Mammary epithelial cell (primary cell): ENCODE measurements at regions of chr3 and their contacts with region 1.

Region 1: GRCh38 chr3:186540221-186540834 is 3.9 kb downstream of the CRYGS start:
- DNase-seq: peak; percentile 78
- H3K4me3 ChIP-seq: no peak overlapping the region
- H3K27ac ChIP-seq: peak overlapping the region; percentile 4
- H3K4me1 ChIP-seq: peaks cover 17% of the 10 kb centered on the region
- H3K27me3 ChIP-seq: no peaks in the 10 kb centered on the region
- CTCF ChIP-seq: peak; percentile 64 to 66

Region 2: GRCh38 chr3:186277268-186277909 is 262.9 kb before region 1 on chr3:
- CTCF ChIA-PET with region 1: interaction called, 4 read pairs
- dilution Hi-C with region 1: no loop called
- in situ Hi-C with region 1: no loop called
- intact Hi-C with region 1: loop called (anchors 1 kb)
- DNase-seq: peak; percentile 48
- H3K4me3 ChIP-seq: no peak overlapping the region
- H3K27ac ChIP-seq: no peak overlapping the region
- H3K4me1 ChIP-seq: no peaks in the 10 kb centered on the region
- H3K27me3 ChIP-seq: no peaks in the 10 kb centered on the region
- CTCF ChIP-seq: peak; percentile 54 to 67

Region 3: DNA sequence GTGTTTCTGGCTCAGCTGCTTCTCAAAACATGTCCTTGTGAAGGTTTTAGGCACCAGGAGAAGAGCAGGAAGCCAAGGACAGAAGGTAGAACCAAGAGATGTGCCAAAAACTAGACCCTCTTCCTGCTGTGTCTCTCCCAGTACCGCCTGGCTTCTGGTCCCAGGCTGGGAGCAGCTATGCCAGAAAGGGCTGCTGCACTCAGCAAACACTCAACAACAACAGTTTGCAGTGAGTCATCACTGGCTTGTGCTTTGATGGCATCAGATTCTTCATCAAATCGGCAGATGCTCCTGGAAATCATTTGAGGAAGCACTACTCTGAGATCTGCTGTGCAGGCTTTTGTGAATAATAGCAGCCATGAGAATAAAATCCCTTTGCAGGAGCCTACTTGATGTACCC is 241.5 kb before region 1 on chr3:
- CTCF ChIA-PET with region 1: interaction called, 10 read pairs
- dilution Hi-C with region 1: no loop called
- in situ Hi-C with region 1: no loop called
- intact Hi-C with region 1: no loop called
- DNase-seq: no peak
- H3K4me3 ChIP-seq: no peak overlapping the region
- H3K27ac ChIP-seq: no peak overlapping the region
- H3K4me1 ChIP-seq: no peaks in the 10 kb centered on the region
- H3K27me3 ChIP-seq: peaks cover 5% of the 10 kb centered on the region
- CTCF ChIP-seq: no peak

Region 4: GRCh38 chr3:186564586-186564985 is 24.3 kb after region 1 on chr3:
- CTCF ChIA-PET with region 1: no interaction called
- dilution Hi-C with region 1: no loop called
- in situ Hi-C with region 1: no loop called
- intact Hi-C with region 1: no loop called
- DNase-seq: no peak
- H3K4me3 ChIP-seq: no peak overlapping the region
- H3K27ac ChIP-seq: no peak overlapping the region
- H3K4me1 ChIP-seq: peaks cover 11% of the 10 kb centered on the region
- H3K27me3 ChIP-seq: no peaks in the 10 kb centered on the region
- CTCF ChIP-seq: no peak

Region 5: DNA sequence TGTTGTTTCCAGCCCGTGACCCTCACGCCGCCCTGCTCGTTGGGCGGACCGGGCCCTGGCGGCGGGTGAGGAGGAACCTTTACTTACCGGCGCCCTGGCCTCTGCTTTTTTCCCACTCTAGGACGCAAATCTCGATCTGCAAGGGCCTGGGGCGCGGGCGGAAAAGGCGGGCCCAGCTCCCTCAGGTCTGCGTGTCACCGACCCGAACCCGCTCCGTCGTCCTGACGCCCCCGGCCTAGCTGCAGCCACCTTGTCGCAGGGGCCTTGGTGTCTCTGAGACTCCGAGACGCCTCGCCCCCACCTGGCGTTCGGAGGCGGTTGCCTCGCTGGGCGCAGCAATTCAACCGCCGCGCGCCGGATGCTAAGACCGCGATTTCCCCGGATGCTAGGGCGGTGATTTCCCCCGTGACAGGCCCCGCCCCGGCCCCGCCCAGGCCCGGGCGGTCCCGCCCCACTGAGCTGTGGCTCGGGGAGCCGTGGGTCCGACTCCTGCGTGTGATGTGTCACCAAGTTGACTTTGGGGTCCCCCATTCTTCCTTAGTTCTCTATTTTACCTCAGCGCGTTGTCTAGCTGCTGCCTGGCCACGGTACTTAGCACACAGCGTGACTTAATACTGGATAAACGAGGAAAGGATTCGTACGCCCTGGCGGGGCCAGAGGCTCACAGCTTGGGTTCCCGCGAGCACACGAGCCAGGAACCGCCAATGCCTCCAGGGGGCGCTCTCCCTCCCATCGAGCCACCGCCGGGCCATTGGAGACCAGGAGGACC is 599.0 kb after region 1 on chr3 and contains the start of gene RPL39L:
- CTCF ChIA-PET with region 1: no interaction called
- dilution Hi-C with region 1: no loop called
- in situ Hi-C with region 1: no loop called
- intact Hi-C with region 1: no loop called
- DNase-seq: peak; percentile 83
- H3K4me3 ChIP-seq: peak within 1 kb of the TSS; percentile 56 to 70 (median 58)
- H3K27ac ChIP-seq: peak within 1 kb of the TSS; percentile 64
- H3K4me1 ChIP-seq: peaks cover 11% of the 10 kb centered on the region
- H3K27me3 ChIP-seq: no peaks in the 10 kb centered on the region
- CTCF ChIP-seq: peak; percentile 89 to 94
- total RNA-seq, gene RPL39L: 7.7 to 21.6 TPM